Esophagus muscularis mucosa (tissue), 4 donors: ENCODE measurements at regions of chr2 and their contacts with region 1.

Region 1: DNA sequence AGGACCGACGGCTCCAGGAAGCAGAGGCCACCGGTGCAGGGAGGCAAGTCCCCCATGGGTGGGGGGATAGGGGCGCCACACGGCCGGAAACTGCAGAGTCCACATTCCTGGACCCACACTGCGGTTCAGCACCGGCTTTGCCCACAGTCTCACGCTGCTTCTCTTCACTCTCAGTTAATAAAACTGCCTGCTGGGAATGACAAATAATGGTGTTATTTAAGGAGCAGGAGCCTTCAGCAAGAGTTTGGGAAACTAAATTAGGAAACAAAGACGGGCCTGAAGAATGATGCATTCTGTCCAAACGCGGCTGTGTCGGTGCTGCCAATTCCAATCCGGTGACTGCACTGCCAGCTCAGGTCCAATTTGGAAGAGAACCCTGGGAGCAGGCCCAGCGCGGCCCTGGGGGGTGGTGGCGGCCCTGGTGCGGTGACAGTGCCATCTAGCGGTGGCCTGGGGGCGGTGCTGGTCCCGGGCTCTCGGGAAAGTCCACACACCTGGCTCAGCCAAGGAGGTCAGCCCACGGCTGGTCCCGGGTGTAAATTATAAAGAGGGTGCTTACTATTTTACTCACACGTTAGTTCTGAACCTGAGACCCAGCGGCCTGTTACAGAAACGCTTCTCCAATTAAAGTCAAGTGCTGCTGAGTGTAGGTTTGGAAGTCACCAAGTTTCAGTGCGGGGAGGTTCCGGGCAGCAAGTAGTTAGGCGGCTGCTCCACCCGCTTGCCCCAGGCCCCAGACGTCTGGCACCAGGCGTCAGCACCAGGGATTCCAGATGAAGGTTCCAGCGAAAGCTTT is 73.1 kb upstream of the PXDN start:
- DNase-seq: peak; percentile 97
- H3K4me3 ChIP-seq: peak overlapping the region in 3 of 4 donors; percentile 24 to 31 (median 24)
- H3K27ac ChIP-seq: peak overlapping the region; percentile 91 to 98 (median 92)
- H3K4me1 ChIP-seq: peaks cover 12 to 44% (median 33%) of the 10 kb centered on the region in 4 donors
- H3K27me3 ChIP-seq: peaks cover 0 to 3% (median 0%) of the 10 kb centered on the region in 4 donors
- CTCF ChIP-seq: peak; percentile 98 to 100 (median 98)
- EP300 ChIP-seq: peak; percentile 75
- POLR2A ChIP-seq: no peak

Region 2: DNA sequence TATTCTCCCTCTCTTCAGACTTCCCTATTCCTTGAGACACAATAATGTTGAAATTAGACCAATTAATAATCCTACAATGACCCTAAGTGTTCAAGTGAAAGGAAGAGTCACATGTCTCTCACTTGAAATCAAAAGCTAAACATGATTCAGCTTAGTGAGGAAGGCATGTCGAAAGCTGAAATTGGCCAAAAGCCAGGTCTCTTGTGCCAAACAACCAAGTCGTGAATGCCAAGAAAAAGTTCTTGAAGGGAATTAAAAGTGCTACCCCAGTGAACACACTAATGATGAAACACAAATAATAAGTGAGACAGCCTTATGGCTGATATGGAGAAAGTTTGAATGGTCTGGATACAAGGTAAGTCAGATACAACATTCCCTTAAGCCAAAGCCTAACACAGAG is 188.6 kb before region 1 on chr2:
- intact Hi-C with region 1: no loop called
- DNase-seq: no peak
- H3K4me3 ChIP-seq: no peak overlapping the region
- H3K27ac ChIP-seq: no peak overlapping the region
- H3K4me1 ChIP-seq: peaks cover 12 to 22% (median 20%) of the 10 kb centered on the region in 4 donors
- H3K27me3 ChIP-seq: no peaks in the 10 kb centered on the region
- CTCF ChIP-seq: no peak
- EP300 ChIP-seq: no peak
- POLR2A ChIP-seq: no peak

Region 3: GRCh38 chr2:1750933-1751766 is 66.3 kb before region 1 on chr2:
- intact Hi-C with region 1: loop called (anchors 5 kb)
- DNase-seq: no peak
- H3K4me3 ChIP-seq: no peak overlapping the region
- H3K27ac ChIP-seq: peak overlapping the region in 2 of 4 donors; percentile 36 to 51
- H3K4me1 ChIP-seq: peaks cover 3 to 19% (median 17%) of the 10 kb centered on the region in 4 donors
- H3K27me3 ChIP-seq: peaks cover 0 to 16% (median 0%) of the 10 kb centered on the region in 4 donors
- CTCF ChIP-seq: peak; percentile 80 to 92 (median 81)
- EP300 ChIP-seq: no peak
- POLR2A ChIP-seq: no peak